ENCODE measurements at regions of chr17 and their contacts with region 1.

Region 1: GRCh38 chr17:68794636-68795434 is 160.4 kb downstream of the ABCA8 start:
- DNase-seq: peak in 3 of 5 donors; percentile 53 to 55 (median 54)
- H3K4me3 ChIP-seq: peak overlapping the region; percentile 0
- H3K27ac ChIP-seq: peak overlapping the region; percentile 56 to 74
- H3K4me1 ChIP-seq: peaks cover 31% of the 10 kb centered on the region
- H3K27me3 ChIP-seq: no peaks in the 10 kb centered on the region
- CTCF ChIP-seq: peak in 2 of 3 donors; percentile 40
- EP300 ChIP-seq: no peak
- POLR2A ChIP-seq: no peak

Region 2: DNA sequence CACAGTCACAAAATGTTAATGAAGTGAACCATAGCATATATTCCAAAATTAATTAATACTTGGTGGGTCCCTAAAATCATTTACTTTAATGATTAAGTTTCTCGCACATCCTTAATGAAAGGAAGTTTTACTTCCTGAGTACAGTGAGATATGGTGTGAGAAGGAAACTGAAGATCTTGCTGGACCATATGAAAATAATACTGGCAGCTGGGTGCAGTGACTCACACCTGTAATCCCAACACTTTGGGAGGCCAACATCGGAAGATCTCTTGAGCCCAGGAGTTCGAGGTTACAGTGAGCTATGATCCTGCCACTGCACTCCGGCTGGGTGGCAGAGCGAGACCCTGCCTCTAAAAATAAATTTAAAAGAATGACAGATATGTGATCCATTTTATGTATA is 97.8 kb after region 1 on chr17:
- intact Hi-C with region 1: no loop called
- DNase-seq: no peak
- H3K4me3 ChIP-seq: no peak overlapping the region
- H3K27ac ChIP-seq: no peak overlapping the region
- H3K4me1 ChIP-seq: no peaks in the 10 kb centered on the region
- H3K27me3 ChIP-seq: no peaks in the 10 kb centered on the region
- CTCF ChIP-seq: no peak
- EP300 ChIP-seq: no peak
- POLR2A ChIP-seq: no peak

Region 3: GRCh38 chr17:68909066-68909465 is 114.2 kb after region 1 on chr17:
- intact Hi-C with region 1: loop called in 1 of 4 experiments (anchors 10 kb)
- DNase-seq: peak in 4 of 5 donors; percentile 20 to 70 (median 48)
- H3K4me3 ChIP-seq: no peak overlapping the region
- H3K27ac ChIP-seq: peak overlapping the region in 1 of 2 donors; percentile 65
- H3K4me1 ChIP-seq: peaks cover 6% of the 10 kb centered on the region
- H3K27me3 ChIP-seq: no peaks in the 10 kb centered on the region
- CTCF ChIP-seq: no peak
- EP300 ChIP-seq: no peak
- POLR2A ChIP-seq: no peak

Region 4: GRCh38 chr17:68972119-68972704 is 177.4 kb after region 1 on chr17:
- intact Hi-C with region 1: loop called in 1 of 4 experiments (anchors 5 kb)
- DNase-seq: peak in 2 of 5 donors; percentile 36 to 49
- H3K4me3 ChIP-seq: no peak overlapping the region
- H3K27ac ChIP-seq: no peak overlapping the region
- H3K4me1 ChIP-seq: peaks cover 5% of the 10 kb centered on the region
- H3K27me3 ChIP-seq: no peaks in the 10 kb centered on the region
- CTCF ChIP-seq: peak; percentile 56 to 87 (median 78)
- EP300 ChIP-seq: no peak
- POLR2A ChIP-seq: no peak

Measured in ovary (tissue), 10 donors.